WTC11 (cell line): ENCODE measurements at regions of chr13 and their contacts with region 1.

Region 1: GRCh38 chr13:70090036-70090723 is 17.4 kb upstream of the ATXN8OS start:
- DNase-seq: no peak
- ATAC-seq: no peak
- H3K4me3 Mint-ChIP-seq: no peak overlapping the region
- H3K27ac Mint-ChIP-seq: no peak overlapping the region
- H3K4me1 Mint-ChIP-seq: peaks cover 19% of the 10 kb centered on the region
- H3K27me3 Mint-ChIP-seq: no peaks in the 10 kb centered on the region
- CTCF ChIP-seq: no peak

Region 2: DNA sequence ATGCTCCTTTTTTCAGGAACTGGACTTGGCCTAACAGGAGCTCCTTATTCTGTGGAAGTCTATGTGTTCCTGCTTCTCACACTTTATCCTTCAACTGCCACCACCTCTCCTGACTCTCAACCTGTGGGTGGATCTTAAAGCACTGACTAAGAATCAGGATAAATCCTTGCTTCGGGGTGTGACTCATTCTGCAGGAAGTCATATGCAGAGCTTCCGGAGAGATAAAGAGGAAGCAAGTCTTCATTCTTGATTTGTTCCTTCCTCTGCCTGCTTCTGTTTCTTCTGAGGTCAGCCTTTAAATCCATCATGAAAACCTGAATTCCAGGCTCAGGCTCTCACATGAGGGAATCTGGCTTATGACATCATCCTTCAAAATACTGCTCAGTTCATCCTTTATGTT is 119.7 kb before region 1 on chr13:
- CTCF ChIA-PET with region 1: no interaction called
- POLR2A ChIA-PET with region 1: interaction called, 11 read pairs
- DNase-seq: no peak
- ATAC-seq: peak; percentile 85
- H3K4me3 Mint-ChIP-seq: no peak overlapping the region
- H3K27ac Mint-ChIP-seq: peak overlapping the region; percentile 3
- H3K4me1 Mint-ChIP-seq: peaks cover 12% of the 10 kb centered on the region
- H3K27me3 Mint-ChIP-seq: no peaks in the 10 kb centered on the region
- CTCF ChIP-seq: no peak